ENCODE measurements at regions of chr7 and their contacts with region 1.

Region 1: DNA sequence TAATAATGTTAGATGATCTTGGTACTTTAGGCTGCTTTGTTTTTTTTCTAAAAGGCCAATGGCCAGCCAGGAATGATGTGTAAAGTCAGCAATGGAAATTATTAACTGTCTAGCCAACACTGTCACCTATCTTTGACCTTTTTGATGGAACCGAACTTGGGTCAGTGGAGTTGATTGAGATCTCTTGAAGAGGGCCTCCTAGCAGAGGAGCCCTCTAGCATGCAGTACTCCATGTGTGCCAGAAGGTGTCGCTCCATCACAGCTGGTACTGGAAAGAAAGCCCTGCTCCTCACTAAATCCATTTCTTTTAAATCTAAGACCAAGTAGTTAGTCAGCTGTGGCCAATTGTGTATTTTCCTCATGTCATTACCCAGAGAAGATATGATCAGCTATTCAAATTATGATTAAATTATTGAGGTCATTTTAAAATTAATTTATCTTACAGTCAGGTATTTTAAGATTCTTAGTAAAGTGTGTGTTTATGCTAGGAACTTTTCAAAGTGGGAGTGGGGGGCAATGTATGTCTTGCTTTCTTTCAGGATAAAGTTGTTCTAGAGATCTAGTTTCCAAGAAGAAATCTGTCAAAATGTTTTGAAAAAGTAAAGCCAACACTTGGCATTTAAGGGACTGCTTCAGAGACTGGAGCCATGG is 33.1 kb upstream of the CROT start:
- DNase-seq: peak; percentile 78 to 89 (median 85)
- ATAC-seq: peak; percentile 98
- H3K4me3 ChIP-seq: no peak overlapping the region
- H3K27ac ChIP-seq: no peak overlapping the region
- H3K4me1 ChIP-seq: no peaks in the 10 kb centered on the region
- H3K27me3 ChIP-seq: no peaks in the 10 kb centered on the region
- CTCF ChIP-seq: peak; percentile 93 to 99 (median 97)
- EP300 ChIP-seq: no peak
- POLR2A ChIP-seq: no peak
- RAD21 ChIP-seq: peak; percentile 99

Region 2: DNA sequence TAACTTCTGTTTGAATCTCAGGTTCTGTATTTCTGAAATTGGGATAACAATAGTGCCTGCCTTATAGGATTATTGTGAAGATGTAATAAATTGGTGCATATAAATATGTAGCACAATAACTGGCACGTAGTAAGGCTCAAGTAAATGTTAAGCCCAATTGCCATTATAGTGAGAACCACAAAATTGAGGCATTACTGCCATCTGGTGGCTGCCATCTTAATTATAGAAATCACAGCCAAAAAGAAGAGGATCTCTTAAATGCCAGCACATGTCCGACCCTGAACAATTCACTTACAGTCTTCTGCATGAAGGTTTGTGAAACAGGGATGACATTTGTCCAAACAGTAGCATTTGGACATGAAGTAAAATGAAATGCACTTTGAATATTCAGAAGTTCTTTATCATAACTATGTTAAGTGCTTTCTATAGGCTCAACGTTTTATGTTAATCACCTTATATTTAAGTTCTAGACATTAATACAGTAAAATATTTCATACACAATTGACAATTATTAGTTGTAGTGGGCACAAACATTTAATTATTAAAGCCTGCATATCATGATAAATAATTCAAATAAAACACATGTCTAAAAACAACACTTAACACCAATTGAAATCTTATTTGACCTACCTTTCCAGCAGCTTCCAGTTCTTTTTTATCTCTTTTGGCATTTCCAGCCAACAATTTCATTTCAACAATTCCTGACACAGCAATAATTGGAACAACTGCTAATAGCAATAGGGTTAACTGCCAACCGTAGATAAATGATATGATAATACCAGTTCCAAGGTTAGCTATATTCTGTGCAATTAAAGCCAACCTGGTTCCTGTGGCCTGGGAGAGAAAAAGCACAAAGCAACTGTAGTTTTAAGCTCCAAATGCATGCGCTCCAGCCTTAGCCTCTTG is 104.6 kb after region 1 on chr7:
- CTCF ChIA-PET with region 1: interaction called, 104 read pairs
- POLR2A ChIA-PET with region 1: interaction called, 3 read pairs
- in situ Hi-C with region 1: loop called (anchors 5 kb)
- intact Hi-C with region 1: loop called (anchors 1 kb)
- DNase-seq: peak; percentile 47 to 81 (median 53)
- ATAC-seq: peak; percentile 90
- H3K4me3 ChIP-seq: no peak overlapping the region
- H3K27ac ChIP-seq: no peak overlapping the region
- H3K4me1 ChIP-seq: no peaks in the 10 kb centered on the region
- H3K27me3 ChIP-seq: no peaks in the 10 kb centered on the region; a peak in 1 of 5 replicates
- CTCF ChIP-seq: peak; percentile 67 to 93 (median 78)
- EP300 ChIP-seq: no peak
- POLR2A ChIP-seq: no peak
- RAD21 ChIP-seq: peak; percentile 99

Region 3: GRCh38 chr7:87506246-87507180 is 194.2 kb after region 1 on chr7:
- CTCF ChIA-PET with region 1: interaction called, 3 read pairs
- POLR2A ChIA-PET with region 1: no interaction called
- in situ Hi-C with region 1: no loop called
- intact Hi-C with region 1: loop called (anchors 1 kb)
- DNase-seq: peak in 1 of 4 experiments; percentile 16
- ATAC-seq: peak; percentile 41; the same call in 1 of the 3 replicates
- H3K4me3 ChIP-seq: no peak overlapping the region
- H3K27ac ChIP-seq: no peak overlapping the region
- H3K4me1 ChIP-seq: no peaks in the 10 kb centered on the region
- H3K27me3 ChIP-seq: no peaks in the 10 kb centered on the region
- CTCF ChIP-seq: peak in 2 of 3 experiments; percentile 14 to 60; a peak in 2 of 6 replicates
- EP300 ChIP-seq: no peak
- POLR2A ChIP-seq: no peak
- RAD21 ChIP-seq: peak; percentile 63 to 74

Region 4: DNA sequence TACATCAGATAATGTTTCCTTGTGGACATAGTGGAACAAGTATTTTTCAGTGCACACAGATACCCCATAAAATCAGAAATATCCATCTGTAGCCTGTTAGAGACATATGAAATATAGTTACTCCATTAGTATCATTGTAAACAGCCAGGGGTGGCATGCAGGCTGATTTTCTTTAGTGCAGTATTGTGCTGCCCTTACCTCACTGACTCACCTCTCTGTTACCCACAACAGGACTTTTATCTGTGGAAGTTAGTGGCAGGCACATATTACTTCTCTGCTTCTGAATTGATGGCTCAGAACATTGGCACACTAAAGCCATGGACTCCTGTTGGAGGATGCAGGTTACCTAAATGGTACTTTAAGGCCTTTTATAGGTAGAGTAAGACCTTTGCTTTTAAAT is 493.8 kb after region 1 on chr7:
- CTCF ChIA-PET with region 1: no interaction called
- POLR2A ChIA-PET with region 1: no interaction called
- in situ Hi-C with region 1: no loop called
- intact Hi-C with region 1: loop called (anchors 10 kb)
- DNase-seq: no peak
- ATAC-seq: no peak
- H3K4me3 ChIP-seq: no peak overlapping the region
- H3K27ac ChIP-seq: no peak overlapping the region
- H3K4me1 ChIP-seq: no peaks in the 10 kb centered on the region
- H3K27me3 ChIP-seq: no peaks in the 10 kb centered on the region
- CTCF ChIP-seq: no peak
- EP300 ChIP-seq: no peak
- POLR2A ChIP-seq: no peak
- RAD21 ChIP-seq: no peak

Region 5: GRCh38 chr7:87886875-87887274 is 574.5 kb after region 1 on chr7:
- CTCF ChIA-PET with region 1: no interaction called
- POLR2A ChIA-PET with region 1: no interaction called
- in situ Hi-C with region 1: no loop called
- intact Hi-C with region 1: loop called (anchors 5 kb)
- DNase-seq: no peak
- ATAC-seq: 0 out of 3 replicates have a peak, but pooled peaks have one; percentile 33
- H3K4me3 ChIP-seq: no peak overlapping the region
- H3K27ac ChIP-seq: no peak overlapping the region
- H3K4me1 ChIP-seq: no peaks in the 10 kb centered on the region
- H3K27me3 ChIP-seq: no peaks in the 10 kb centered on the region
- CTCF ChIP-seq: peak in 2 of 3 experiments; percentile 20 to 50; a peak in 2 of 6 replicates
- EP300 ChIP-seq: no peak
- POLR2A ChIP-seq: no peak
- RAD21 ChIP-seq: peak; percentile 51 to 56

Region 6: GRCh38 chr7:88111136-88111743 is 798.9 kb after region 1 on chr7:
- CTCF ChIA-PET with region 1: no interaction called
- POLR2A ChIA-PET with region 1: no interaction called
- in situ Hi-C with region 1: loop called (anchors 10 kb)
- intact Hi-C with region 1: loop called (anchors 1 kb)
- DNase-seq: peak; percentile 25 to 39 (median 31)
- ATAC-seq: peak; percentile 73
- H3K4me3 ChIP-seq: no peak overlapping the region
- H3K27ac ChIP-seq: no peak overlapping the region
- H3K4me1 ChIP-seq: no peaks in the 10 kb centered on the region
- H3K27me3 ChIP-seq: no peaks in the 10 kb centered on the region
- CTCF ChIP-seq: peak; percentile 30 to 75 (median 48); a peak in 3 of 6 replicates
- EP300 ChIP-seq: no peak
- POLR2A ChIP-seq: no peak
- RAD21 ChIP-seq: peak; percentile 78 to 84